ENCODE measurements at regions of chr21 and their contacts with region 1.

Region 1: DNA sequence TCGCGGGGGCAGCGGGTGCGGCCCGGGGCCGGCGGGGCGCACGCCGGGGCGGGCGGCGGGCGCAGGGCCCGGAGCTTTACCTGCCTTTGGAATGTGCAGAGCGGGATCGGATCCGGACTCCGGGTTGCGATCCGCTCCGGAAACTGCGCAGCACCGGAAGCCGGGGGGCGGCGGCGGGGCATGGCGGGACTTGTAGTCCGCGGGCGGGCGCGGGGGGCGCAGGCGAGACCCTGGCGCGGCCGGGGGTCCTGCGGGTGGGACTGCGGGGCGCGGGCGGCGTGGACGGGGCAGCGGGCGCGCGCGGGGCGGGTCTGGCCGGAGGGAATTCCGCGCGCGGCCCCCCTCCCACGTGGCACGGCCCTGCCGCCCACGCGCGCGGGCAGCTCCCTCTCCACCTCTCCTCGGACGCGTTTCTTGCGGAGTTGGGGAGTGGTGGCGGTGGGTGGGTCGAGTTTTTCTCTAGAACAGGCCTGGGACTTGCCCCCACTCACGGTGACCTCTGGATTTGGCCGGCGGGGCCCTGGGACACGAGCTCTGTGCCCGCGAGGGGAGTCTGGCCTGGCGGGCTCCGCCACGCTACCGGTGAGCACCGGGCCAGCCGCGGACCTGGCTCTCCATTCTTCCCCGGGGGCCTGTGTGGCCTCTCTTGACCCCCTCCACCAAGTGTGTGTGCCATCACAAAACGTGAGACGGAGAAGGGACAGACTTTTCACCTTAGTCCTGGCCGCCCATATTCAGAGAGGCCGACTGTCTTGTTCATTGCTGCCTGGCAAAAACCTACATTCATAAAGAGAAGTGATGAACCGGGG is at the start of gene PRDM15:
- DNase-seq: peak; percentile 83
- ATAC-seq: peak; percentile 63
- H3K4me3 Mint-ChIP-seq: peak within 1 kb of the TSS; percentile 90
- H3K27ac Mint-ChIP-seq: peak within 1 kb of the TSS; percentile 93
- H3K4me1 Mint-ChIP-seq: peaks cover 39% of the 10 kb centered on the region
- H3K27me3 Mint-ChIP-seq: no peaks in the 10 kb centered on the region
- CTCF ChIP-seq: no peak
- total RNA-seq, gene PRDM15: 12.8 and 13.6 TPM in 2 replicates

Region 2: DNA sequence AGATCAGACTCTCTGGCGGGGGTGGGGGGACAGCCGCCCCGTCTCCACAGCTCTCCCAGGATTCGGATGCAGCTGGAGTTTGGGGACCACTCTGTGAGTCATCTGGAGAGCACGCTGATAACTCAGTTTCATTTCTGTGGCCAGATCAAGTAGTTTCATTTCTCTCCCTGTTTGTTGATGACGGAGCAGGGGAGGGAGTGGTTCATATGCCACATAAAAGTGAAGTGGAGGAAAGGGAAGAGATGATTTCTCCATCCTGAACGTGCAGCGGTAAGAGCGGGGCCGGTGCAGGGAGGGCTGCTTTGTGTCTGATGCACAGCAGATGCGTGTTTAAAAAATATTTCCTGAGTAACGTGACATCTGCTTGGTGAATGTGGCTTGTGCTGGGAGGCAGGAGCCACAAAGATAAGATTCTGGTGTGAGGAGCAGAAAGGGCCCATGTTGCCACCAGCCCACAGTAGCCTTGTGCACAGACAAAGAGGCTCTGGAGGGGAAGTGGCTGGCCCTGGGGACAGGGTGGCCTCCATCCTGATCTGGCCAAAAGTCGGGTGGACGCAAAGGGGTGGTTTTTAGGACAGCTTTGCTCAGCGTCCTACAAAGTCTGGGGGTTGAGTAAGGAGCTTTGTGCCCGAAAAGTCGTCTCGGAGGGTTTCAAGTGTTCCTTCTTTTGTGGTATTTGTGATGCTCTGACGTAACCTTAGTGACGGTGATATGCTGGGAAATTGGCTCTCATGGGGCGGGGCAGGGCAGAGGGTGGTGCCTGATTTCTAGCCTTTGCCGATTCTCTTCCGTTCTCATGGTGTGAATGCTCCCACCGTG is 517.4 kb before region 1 on chr21 and contains the start of gene MX2:
- CTCF ChIA-PET with region 1: no interaction called
- POLR2A ChIA-PET with region 1: no interaction called
- intact Hi-C with region 1: loop called (anchors 5 kb)
- DNase-seq: peak; percentile 51
- ATAC-seq: peak; percentile 78
- H3K4me3 Mint-ChIP-seq: peak within 1 kb of the TSS; percentile 84
- H3K27ac Mint-ChIP-seq: peak within 1 kb of the TSS; percentile 97
- H3K4me1 Mint-ChIP-seq: peaks cover 61% of the 10 kb centered on the region
- H3K27me3 Mint-ChIP-seq: no peaks in the 10 kb centered on the region
- CTCF ChIP-seq: no peak
- total RNA-seq, gene MX2: 32.6 and 34.4 TPM in 2 replicates

Region 3: DNA sequence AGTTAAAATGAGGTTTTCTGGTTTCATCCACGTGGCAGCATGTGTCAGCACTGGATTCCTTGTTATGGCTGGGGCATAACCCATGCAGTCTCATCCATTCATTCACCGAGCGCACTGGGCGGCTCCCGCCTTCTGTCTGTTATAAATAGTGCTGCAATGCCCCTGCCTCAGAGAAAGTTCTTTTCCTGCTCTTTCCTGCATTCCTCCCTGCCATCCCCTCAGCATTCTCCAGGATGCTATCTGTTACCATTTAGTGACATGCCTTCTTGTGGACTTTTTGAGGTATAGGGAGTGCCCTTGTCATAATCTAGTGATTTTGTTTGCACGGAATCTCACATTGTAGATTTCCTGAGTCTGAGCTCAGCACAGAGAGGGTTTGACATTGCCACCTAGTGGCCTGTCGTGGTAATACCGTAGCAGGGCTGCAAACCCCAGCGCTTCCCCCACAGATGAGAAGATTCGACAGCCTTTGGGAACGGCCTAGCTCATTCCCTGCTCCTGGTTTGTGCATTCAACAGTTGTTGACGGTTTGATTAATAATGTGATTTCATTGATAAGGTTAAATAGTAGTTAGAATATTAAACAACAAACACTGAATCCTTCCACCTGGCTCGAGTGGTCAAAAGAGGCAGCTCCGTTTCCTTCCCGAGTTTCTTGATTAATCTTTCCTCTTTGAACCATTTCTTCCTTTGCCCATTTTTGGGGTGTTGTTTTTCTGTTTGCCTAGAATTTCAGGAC is 238.0 kb after region 1 on chr21:
- CTCF ChIA-PET with region 1: interaction called, 10 read pairs
- POLR2A ChIA-PET with region 1: interaction called, 5 read pairs
- intact Hi-C with region 1: loop called (anchors 5 kb)
- DNase-seq: peak; percentile 61
- ATAC-seq: peak; percentile 85
- H3K4me3 Mint-ChIP-seq: peak overlapping the region; percentile 37
- H3K27ac Mint-ChIP-seq: no peak overlapping the region
- H3K4me1 Mint-ChIP-seq: peaks cover 48% of the 10 kb centered on the region
- H3K27me3 Mint-ChIP-seq: peaks cover 16% of the 10 kb centered on the region
- CTCF ChIP-seq: peak; percentile 70